HEK293T (cell line): ENCODE measurements at regions of chr6 and their contacts with region 1.

Region 1: DNA sequence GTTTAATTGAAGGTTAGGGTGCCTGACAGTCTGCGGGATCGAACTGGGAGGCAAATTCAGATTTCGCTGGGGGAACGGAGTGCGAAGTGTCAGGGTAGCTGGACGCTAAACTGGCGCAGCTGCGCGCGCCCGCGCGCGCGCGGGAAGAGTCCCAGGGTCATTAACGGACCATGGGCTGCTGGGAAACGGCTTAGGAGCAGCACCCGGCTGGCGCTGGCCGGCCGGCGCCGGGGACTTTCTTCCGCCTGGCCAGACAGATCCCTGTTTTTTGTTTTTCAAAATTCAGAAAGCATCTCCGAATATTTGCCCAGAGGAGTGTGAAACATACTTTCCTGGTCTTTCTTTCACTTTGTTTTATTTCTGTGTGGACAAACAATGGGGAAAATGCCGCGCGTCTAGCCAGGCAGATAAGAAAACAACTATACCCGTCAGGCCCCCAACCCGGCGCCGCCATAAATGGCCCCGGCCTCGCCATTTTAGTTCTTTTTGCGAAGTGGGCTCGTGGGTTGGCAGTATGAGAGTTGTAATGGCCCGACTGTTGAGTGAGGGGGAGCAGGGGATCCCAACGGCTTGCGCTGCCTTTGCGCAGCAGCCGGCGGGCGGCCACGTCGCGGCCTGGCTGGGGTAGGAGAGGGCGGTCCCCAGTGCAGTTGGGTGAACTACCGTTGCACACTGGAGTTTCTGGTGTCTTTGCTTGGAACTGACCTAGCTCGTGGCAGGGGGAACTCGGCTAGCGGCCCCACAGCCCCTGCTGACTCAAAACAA is 7.1 kb downstream of the HSPA1B start:
- DNase-seq: peak; percentile 85

Region 2: GRCh38 chr6:31752739-31753319 is 81.8 kb before region 1 on chr6:
- CTCF ChIA-PET with region 1: no interaction called
- POLR2A ChIA-PET with region 1: no interaction called
- DNase-seq: no peak

Region 3: DNA sequence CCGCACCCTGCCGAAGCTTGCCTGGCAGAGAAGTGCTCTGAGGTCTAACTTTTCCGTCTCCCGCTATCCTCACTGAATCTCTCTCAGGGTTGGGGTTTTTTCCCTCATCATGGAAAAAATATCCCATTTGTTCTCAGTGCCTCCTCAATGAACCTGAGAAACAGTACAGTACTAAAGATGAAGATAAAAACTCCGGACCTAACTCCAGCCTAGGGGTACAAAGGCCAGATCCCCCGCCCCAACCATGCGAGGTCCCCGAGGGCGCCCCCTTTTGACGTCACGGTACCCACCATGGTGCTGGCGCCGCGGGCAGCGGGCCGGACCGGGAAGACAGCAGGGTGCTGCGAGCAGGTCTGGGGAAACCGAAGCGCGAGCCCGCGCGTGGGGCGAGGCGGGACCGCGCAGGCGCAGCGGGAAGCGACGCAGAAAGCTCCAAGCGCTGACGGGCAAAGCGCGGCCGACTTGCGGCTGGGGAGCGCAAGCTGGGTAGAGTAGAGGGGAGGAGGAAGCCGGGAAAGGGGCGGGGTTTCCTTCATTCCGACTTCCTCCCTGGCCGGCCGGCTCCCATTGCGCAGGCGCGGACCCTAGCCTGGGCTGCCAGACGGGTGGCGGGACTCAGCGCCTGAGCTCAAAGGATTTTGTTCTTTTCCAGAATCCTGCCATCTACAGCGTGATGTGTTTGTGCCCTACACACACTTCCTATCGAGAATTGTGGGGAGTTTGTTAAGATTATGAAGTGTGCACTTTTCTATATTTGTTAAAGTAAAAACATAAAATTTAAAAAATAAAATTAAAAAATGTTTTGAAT is 27.9 kb before region 1 on chr6 and contains the start of gene LSM2:
- CTCF ChIA-PET with region 1: interaction called, 6 read pairs
- POLR2A ChIA-PET with region 1: interaction called, 24 read pairs
- DNase-seq: peak; percentile 100

Region 4: DNA sequence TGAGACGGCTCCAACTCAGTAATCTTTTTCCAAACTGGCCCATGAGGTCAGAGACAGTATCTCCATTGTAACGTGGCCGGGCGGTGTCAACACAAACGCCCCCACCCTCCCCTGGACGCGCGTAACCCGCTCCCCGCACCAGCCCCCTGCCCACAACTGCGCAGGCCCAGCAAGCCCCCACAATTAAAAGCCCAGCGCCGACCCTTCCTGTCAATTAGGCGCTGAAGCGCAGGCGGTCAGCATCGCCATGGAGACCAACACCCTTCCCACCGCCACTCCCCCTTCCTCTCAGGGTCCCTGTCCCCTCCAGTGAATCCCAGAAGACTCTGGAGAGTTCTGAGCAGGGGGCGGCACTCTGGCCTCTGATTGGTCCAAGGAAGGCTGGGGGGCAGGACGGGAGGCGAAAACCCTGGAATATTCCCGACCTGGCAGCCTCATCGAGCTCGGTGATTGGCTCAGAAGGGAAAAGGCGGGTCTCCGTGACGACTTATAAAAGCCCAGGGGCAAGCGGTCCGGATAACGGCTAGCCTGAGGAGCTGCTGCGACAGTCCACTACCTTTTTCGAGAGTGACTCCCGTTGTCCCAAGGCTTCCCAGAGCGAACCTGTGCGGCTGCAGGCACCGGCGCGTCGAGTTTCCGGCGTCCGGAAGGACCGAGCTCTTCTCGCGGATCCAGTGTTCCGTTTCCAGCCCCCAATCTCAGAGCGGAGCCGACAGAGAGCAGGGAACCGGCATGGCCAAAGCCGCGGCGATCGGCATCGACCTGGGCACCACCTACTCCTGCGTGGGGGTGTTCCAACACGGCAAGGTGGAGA is 19.4 kb before region 1 on chr6 and contains the starts of genes HSPA1A and HSPA1L:
- CTCF ChIA-PET with region 1: interaction called, 6 read pairs
- POLR2A ChIA-PET with region 1: interaction called, 65 read pairs
- DNase-seq: no peak

Region 5: DNA sequence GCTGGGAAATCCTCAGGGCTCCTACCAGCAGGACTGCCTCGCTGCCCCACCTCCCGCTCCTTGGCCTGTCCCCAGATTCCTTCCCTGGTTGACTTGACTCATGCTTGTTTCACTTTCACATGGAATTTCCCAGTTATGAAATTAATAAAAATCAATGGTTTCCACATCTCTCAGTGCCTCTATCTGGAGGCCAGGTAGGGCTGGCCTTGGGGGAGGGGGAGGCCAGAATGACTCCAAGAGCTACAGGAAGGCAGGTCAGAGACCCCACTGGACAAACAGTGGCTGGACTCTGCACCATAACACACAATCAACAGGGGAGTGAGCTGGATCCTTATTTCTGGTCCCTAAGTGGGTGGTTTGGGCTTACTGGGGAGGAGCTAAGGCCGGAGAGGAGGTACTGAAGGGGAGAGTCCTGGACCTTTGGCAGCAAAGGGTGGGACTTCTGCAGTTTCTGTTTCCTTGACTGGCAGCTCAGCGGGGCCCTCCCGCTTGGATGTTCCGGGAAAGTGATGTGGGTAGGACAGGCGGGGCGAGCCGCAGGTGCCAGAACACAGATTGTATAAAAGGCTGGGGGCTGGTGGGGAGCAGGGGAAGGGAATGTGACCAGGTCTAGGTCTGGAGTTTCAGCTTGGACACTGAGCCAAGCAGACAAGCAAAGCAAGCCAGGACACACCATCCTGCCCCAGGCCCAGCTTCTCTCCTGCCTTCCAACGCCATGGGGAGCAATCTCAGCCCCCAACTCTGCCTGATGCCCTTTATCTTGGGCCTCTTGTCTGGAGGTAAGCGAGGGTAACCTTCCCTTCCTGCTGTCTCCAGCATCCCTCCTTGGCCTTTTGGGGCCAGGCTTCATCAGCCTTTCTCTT is 111.1 kb after region 1 on chr6 and contains the start of gene CFB:
- CTCF ChIA-PET with region 1: no interaction called
- POLR2A ChIA-PET with region 1: no interaction called
- DNase-seq: no peak